CD4-positive, alpha-beta T cell (primary cell): ENCODE measurements at regions of chr11 and their contacts with region 1.

Region 1: GRCh38 chr11:61111786-61112517 is 9.7 kb downstream of the CD5 start:
- DNase-seq: peak in 13 of 14 experiments; percentile 28 to 87 (median 52)
- ATAC-seq: peak; percentile 78
- H3K4me3 ChIP-seq: peak overlapping the region; percentile 24
- H3K4me3 Mint-ChIP-seq: peak overlapping the region; percentile 83
- H3K27ac ChIP-seq: peak overlapping the region; percentile 67 to 71
- H3K27ac Mint-ChIP-seq: no peak overlapping the region
- H3K4me1 ChIP-seq: peaks cover 100% of the 10 kb centered on the region
- H3K4me1 Mint-ChIP-seq: peaks cover 100% of the 10 kb centered on the region
- H3K27me3 ChIP-seq: no peaks in the 10 kb centered on the region
- H3K27me3 Mint-ChIP-seq: no peaks in the 10 kb centered on the region
- CTCF ChIP-seq: no peak

Region 2: GRCh38 chr11:60978546-60979380 is 133.2 kb before region 1 on chr11:
- CTCF ChIA-PET with region 1: no interaction called
- POLR2A ChIA-PET with region 1: interaction called, 49 read pairs
- intact Hi-C with region 1: no loop called
- DNase-seq: peak in 5 of 14 experiments; percentile 37 to 76 (median 71)
- ATAC-seq: peak; percentile 15
- H3K4me3 ChIP-seq: peak overlapping the region; percentile 27
- H3K4me3 Mint-ChIP-seq: peak overlapping the region; percentile 91
- H3K27ac ChIP-seq: peak overlapping the region; percentile 75 to 95
- H3K27ac Mint-ChIP-seq: peak overlapping the region; percentile 94
- H3K4me1 ChIP-seq: peaks cover 87% of the 10 kb centered on the region
- H3K4me1 Mint-ChIP-seq: peaks cover 87% of the 10 kb centered on the region
- H3K27me3 ChIP-seq: no peaks in the 10 kb centered on the region
- H3K27me3 Mint-ChIP-seq: no peaks in the 10 kb centered on the region
- CTCF ChIP-seq: no peak

Region 3: DNA sequence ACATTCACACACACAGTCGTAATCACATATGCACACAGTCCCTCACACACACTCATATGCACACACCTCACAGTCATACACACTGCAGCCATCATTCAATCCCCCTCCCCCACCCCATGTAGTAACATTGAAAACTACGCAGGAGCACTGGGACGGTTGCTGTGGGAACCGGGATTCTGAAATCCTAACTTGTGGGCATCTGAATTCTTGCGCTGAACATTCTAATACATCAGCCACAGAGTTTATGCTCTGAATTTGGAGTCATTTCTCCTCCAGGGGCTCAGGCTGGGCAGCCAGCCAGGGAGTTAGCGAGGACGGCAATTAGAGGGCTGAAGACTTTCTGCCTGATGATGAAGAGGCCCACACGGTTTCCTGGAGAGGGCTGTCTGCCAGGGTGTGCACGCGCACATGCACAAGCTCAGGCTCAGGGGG is 107.8 kb before region 1 on chr11:
- CTCF ChIA-PET with region 1: no interaction called
- POLR2A ChIA-PET with region 1: interaction called, 11 read pairs
- intact Hi-C with region 1: no loop called
- DNase-seq: peak in 11 of 14 experiments; percentile 40 to 73 (median 55)
- ATAC-seq: peak; percentile 59
- H3K4me3 ChIP-seq: peak overlapping the region; percentile 30
- H3K4me3 Mint-ChIP-seq: peak overlapping the region; percentile 86
- H3K27ac ChIP-seq: peak overlapping the region; percentile 63 to 71
- H3K27ac Mint-ChIP-seq: peak overlapping the region; percentile 95
- H3K4me1 ChIP-seq: peaks cover 89% of the 10 kb centered on the region
- H3K4me1 Mint-ChIP-seq: peaks cover 92% of the 10 kb centered on the region
- H3K27me3 ChIP-seq: no peaks in the 10 kb centered on the region
- H3K27me3 Mint-ChIP-seq: no peaks in the 10 kb centered on the region
- CTCF ChIP-seq: no peak

Region 4: GRCh38 chr11:61061081-61061826 is 50.7 kb before region 1 on chr11:
- CTCF ChIA-PET with region 1: interaction called, 4 read pairs
- POLR2A ChIA-PET with region 1: interaction called, 12 read pairs
- intact Hi-C with region 1: no loop called
- DNase-seq: peak; percentile 43 to 92 (median 72)
- ATAC-seq: peak; percentile 78
- H3K4me3 ChIP-seq: peak overlapping the region; percentile 36
- H3K4me3 Mint-ChIP-seq: peak overlapping the region; percentile 82
- H3K27ac ChIP-seq: peak overlapping the region; percentile 74 to 85
- H3K27ac Mint-ChIP-seq: peak overlapping the region; percentile 92
- H3K4me1 ChIP-seq: peaks cover 82% of the 10 kb centered on the region
- H3K4me1 Mint-ChIP-seq: peaks cover 76% of the 10 kb centered on the region
- H3K27me3 ChIP-seq: no peaks in the 10 kb centered on the region
- H3K27me3 Mint-ChIP-seq: no peaks in the 10 kb centered on the region
- CTCF ChIP-seq: no peak

Region 5: DNA sequence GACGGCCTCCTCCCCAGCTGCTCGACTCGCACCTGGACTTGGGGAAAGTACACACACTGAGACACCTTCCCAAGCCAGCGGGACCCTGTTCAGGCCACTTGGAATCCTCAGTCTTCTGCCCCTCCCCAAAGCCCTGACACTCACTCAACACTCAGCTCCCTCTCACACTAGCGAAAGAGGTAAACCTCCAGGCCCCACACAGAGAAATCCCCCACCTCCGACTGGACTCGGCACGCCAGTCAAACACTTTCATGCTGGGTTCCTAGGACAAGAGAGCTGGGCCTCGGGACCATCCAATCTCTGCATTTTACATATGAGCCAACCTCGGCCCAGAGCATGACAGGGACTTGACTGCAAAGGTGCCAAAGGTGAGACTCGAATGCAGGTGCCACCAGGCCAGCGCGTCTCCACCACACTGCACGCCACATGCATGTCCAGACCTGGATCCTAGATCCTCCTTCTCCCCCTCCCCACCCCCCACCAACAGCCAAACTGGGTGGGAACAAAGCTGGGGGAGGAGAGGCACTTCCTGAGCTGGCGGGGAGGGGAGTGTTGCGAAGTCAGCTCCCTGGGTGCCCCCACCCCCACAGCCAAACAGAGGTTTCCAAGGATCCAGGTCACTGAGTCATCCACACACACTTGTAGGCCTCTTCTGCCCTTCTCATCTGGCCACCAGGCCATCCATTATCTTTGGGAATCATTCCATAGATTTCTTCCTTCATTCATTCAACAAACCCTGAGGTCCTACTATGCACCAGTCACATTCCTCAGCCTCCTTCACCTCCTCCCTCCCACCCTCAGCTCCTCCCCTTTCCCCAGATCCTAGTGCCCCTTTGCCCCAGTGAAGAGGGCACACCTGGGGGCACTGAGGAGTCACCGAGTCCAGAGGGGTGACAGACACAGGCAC is 20.3 kb before region 1 on chr11:
- CTCF ChIA-PET with region 1: interaction called, 5 read pairs
- POLR2A ChIA-PET with region 1: interaction called, 38 read pairs
- intact Hi-C with region 1: no loop called
- DNase-seq: peak in 6 of 14 experiments; percentile 43 to 74 (median 58)
- ATAC-seq: peak; percentile 52
- H3K4me3 ChIP-seq: peak overlapping the region; percentile 28
- H3K4me3 Mint-ChIP-seq: peak overlapping the region; percentile 81
- H3K27ac ChIP-seq: peak overlapping the region; percentile 59 to 82
- H3K27ac Mint-ChIP-seq: peak overlapping the region; percentile 93
- H3K4me1 ChIP-seq: peaks cover 50% of the 10 kb centered on the region
- H3K4me1 Mint-ChIP-seq: peaks cover 66% of the 10 kb centered on the region
- H3K27me3 ChIP-seq: no peaks in the 10 kb centered on the region
- H3K27me3 Mint-ChIP-seq: no peaks in the 10 kb centered on the region
- CTCF ChIP-seq: no peak

Region 6: GRCh38 chr11:61152816-61153592 is 41.1 kb after region 1 on chr11:
- CTCF ChIA-PET with region 1: no interaction called
- POLR2A ChIA-PET with region 1: no interaction called
- intact Hi-C with region 1: no loop called
- DNase-seq: no peak
- ATAC-seq: no peak
- H3K4me3 ChIP-seq: no peak overlapping the region
- H3K4me3 Mint-ChIP-seq: no peak overlapping the region
- H3K27ac ChIP-seq: no peak overlapping the region
- H3K27ac Mint-ChIP-seq: no peak overlapping the region
- H3K4me1 ChIP-seq: no peaks in the 10 kb centered on the region
- H3K4me1 Mint-ChIP-seq: peaks cover 23% of the 10 kb centered on the region
- H3K27me3 ChIP-seq: no peaks in the 10 kb centered on the region
- H3K27me3 Mint-ChIP-seq: no peaks in the 10 kb centered on the region
- CTCF ChIP-seq: no peak